ENCODE measurements at regions of chr11 and their contacts with region 1.

Region 1: GRCh38 chr11:61733120-61733978 is 19.1 kb upstream of the MYRF start:
- DNase-seq: peak; percentile 95
- ATAC-seq: peak; percentile 90

Region 2: DNA sequence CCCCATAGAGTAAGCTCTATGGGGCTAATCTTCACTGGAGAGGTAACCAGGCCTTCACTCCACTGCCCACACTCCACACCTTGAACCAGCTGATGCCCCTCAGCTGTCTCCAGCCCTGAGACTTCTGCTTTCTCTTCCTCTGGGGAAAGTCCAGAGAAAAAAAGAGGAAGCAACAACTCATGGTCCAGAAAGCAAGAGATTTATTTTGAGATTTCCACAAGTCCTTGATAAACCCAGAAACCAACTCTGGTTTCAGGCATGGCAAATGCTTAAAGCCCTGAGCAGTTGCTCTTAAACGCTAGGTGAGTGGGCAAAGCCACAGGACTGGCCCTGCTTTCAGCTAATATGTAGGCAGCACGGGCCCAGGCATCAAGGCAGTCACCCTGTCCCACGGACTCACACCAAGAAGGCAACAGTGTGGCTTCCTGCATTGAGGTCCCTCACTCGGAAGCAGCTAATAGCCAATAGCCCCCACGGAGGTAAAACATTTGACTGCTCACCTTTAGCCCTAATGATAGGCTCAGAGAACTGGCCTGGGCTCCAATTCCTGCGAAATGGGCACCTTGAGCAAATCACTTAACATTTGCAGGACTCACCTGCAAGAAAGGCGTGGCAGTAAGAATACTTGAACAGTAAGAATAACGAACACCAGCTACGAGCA is 376.0 kb before region 1 on chr11:
- intact Hi-C with region 1: no loop called
- DNase-seq: no peak
- ATAC-seq: no peak

Region 3: GRCh38 chr11:61679893-61680621 is 53.3 kb before region 1 on chr11 and contains the start of gene DAGLA:
- intact Hi-C with region 1: loop called (anchors 5 kb)
- DNase-seq: peak; percentile 88
- ATAC-seq: peak; percentile 68
- total RNA-seq, gene DAGLA: 4.8 TPM